A673 (cell line): ENCODE measurements at regions of chr17 and their contacts with region 1.

Region 1: DNA sequence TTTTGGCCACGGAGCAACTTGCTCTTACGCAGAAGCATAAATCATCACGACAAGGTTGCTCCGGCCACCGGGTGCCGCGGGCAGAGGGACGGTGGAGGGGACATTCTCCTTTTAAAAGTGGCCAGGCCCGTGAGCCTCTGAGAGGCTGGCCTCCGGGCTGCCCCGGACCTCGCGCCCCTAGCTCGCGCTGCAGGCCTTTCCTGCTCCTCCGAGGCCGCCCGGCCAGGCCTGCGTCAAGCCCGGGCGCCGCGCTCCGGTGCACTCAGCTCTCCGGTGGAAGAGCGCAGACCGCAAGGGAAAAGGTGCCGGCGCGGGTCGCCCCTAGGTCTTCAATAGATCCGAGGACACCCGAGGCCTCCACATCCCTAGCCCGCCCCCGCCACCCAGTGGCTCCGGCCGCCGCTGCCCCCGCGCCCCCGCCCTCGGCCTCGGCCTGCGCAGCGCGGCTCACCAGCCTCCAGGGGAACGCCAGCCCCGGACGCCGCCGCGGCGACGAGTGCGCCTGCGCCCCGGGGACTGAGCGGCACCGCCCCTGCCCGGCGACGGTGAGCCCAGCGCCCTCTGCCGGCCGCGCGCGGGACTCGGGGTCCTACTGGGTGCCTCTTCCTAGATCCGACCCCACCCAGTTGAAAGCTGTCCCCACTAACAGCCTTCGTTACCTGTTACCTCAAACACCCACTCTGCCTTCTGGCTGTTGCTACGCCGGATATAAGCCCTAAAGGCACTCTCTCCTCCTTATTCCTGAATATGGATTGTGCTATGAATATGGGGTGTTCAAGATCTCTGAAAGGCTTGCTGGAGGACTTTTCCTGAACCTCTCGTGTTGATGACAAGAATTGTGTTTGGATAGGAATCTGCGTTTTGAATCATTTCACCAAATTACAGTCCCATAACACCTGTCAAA is at the start of gene LYRM9:
- DNase-seq: peak; percentile 91
- H3K4me3 ChIP-seq: peak within 1 kb of the TSS; percentile 70
- H3K27ac ChIP-seq: peak within 1 kb of the TSS; percentile 74
- H3K4me1 ChIP-seq: no peaks in the 10 kb centered on the region
- H3K27me3 ChIP-seq: no peaks in the 10 kb centered on the region
- CTCF ChIP-seq: peak; percentile 80
- total RNA-seq, gene LYRM9: 2.8 and 4.7 TPM in 2 replicates

Region 2: GRCh38 chr17:27805520-27806146 is 87.5 kb before region 1 on chr17:
- CTCF ChIA-PET with region 1: interaction called, 12 read pairs
- POLR2A ChIA-PET with region 1: no interaction called
- intact Hi-C with region 1: no loop called
- DNase-seq: peak; percentile 89
- H3K4me3 ChIP-seq: peak overlapping the region; percentile 30
- H3K27ac ChIP-seq: no peak overlapping the region
- H3K4me1 ChIP-seq: no peaks in the 10 kb centered on the region
- H3K27me3 ChIP-seq: no peaks in the 10 kb centered on the region
- CTCF ChIP-seq: peak; percentile 84

Region 3: GRCh38 chr17:27956601-27957445 is 63.7 kb after region 1 on chr17:
- CTCF ChIA-PET with region 1: no interaction called
- POLR2A ChIA-PET with region 1: no interaction called
- intact Hi-C with region 1: no loop called
- DNase-seq: peak; percentile 54
- H3K4me3 ChIP-seq: no peak overlapping the region
- H3K27ac ChIP-seq: no peak overlapping the region
- H3K4me1 ChIP-seq: peaks cover 7% of the 10 kb centered on the region
- H3K27me3 ChIP-seq: no peaks in the 10 kb centered on the region
- CTCF ChIP-seq: no peak

Region 4: GRCh38 chr17:28001149-28001548 is 108.0 kb after region 1 on chr17:
- CTCF ChIA-PET with region 1: no interaction called
- POLR2A ChIA-PET with region 1: no interaction called
- intact Hi-C with region 1: no loop called
- DNase-seq: no peak
- H3K4me3 ChIP-seq: no peak overlapping the region
- H3K27ac ChIP-seq: no peak overlapping the region
- H3K4me1 ChIP-seq: peaks cover 5% of the 10 kb centered on the region
- H3K27me3 ChIP-seq: no peaks in the 10 kb centered on the region
- CTCF ChIP-seq: no peak

Region 5: GRCh38 chr17:28041068-28041843 is 148.1 kb after region 1 on chr17:
- CTCF ChIA-PET with region 1: no interaction called
- POLR2A ChIA-PET with region 1: no interaction called
- intact Hi-C with region 1: loop called (anchors 10 kb)
- DNase-seq: peak; percentile 100
- H3K4me3 ChIP-seq: peak overlapping the region; percentile 73
- H3K27ac ChIP-seq: peak overlapping the region; percentile 77
- H3K4me1 ChIP-seq: peaks cover 22% of the 10 kb centered on the region
- H3K27me3 ChIP-seq: no peaks in the 10 kb centered on the region
- CTCF ChIP-seq: no peak

Region 6: DNA sequence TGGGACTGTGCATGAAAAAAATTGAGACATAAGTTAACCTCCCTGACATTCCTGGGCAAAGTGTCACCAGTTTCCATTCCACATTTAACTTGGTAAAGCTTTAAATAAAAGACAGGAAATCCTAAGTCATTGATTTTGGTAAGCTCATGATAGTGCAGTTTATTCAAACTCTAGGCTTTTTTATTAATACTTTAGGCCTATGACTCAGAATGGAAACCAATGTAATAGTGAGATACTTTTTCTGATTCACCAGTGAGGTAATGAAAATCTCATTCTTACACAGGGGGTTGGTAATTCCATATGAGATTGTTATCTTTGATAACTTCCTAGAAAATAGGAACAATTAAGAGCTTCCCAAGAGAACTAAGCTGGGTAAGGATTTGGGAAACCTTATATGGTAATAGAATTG is 240.4 kb after region 1 on chr17:
- CTCF ChIA-PET with region 1: no interaction called
- POLR2A ChIA-PET with region 1: no interaction called
- intact Hi-C with region 1: loop called (anchors 5 kb)
- DNase-seq: peak; percentile 61
- H3K4me3 ChIP-seq: no peak overlapping the region
- H3K27ac ChIP-seq: no peak overlapping the region
- H3K4me1 ChIP-seq: peaks cover 20% of the 10 kb centered on the region
- H3K27me3 ChIP-seq: no peaks in the 10 kb centered on the region
- CTCF ChIP-seq: no peak

Region 7: GRCh38 chr17:28252436-28252835 is 359.3 kb after region 1 on chr17:
- CTCF ChIA-PET with region 1: interaction called, 4 read pairs
- POLR2A ChIA-PET with region 1: no interaction called
- intact Hi-C with region 1: loop called (anchors 5 kb)
- DNase-seq: no peak
- H3K4me3 ChIP-seq: no peak overlapping the region
- H3K27ac ChIP-seq: no peak overlapping the region
- H3K4me1 ChIP-seq: no peaks in the 10 kb centered on the region
- H3K27me3 ChIP-seq: no peaks in the 10 kb centered on the region
- CTCF ChIP-seq: no peak